AG04449 (cell line): ENCODE measurements at regions of chr1 and their contacts with region 1.

Region 1: DNA sequence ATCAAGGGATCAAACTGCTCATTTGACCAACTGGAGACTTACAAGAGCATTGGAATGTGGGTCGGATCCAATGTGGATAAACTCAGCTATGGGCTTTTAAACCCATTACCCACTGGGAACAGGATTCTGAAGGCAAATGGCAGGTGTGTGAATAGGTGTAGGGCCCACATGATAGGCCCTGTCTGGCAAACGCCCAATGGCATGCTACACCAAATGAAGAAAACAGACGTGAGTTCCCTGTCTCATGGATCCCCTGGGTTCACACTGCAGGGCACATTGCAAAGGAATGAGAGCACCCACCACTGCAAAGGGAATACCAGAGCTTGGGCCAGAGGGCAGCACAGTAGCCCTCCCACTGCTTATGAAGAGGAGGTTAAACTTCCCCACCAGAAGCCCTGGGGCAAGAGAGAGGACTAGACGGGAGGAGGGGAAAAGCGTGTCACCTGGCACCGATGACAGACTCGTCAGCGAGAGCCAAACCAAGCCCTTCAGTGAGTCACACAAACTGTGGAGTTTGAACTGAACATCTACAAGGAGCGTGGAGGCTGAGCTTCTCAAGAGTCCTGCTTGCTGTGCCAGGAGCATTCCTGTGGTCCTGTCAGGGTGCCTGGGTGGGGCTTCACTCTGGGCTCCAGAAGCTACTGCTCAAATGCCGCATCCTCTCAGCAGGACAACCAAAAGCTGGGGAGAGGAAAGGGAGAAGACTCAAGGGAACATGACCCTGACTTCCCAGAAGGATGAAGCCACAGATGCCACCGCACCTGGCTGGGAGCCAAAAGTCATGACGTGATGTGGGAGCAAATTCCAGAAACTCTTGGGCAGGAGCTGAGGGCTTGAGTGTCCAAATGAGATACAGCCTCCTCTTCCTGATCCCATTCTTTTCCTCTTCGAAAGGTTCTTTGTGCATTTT is 61.1 kb downstream of the TOMM20 start:
- DNase-seq: peak; percentile 97
- H3K4me3 ChIP-seq: no peak overlapping the region
- CTCF ChIP-seq: no peak

Region 2: GRCh38 chr1:235011599-235012435 is 55.7 kb before region 1 on chr1:
- CTCF ChIA-PET with region 1: no interaction called
- POLR2A ChIA-PET with region 1: interaction called, 16 read pairs
- DNase-seq: peak; percentile 100
- H3K4me3 ChIP-seq: no peak overlapping the region
- CTCF ChIP-seq: no peak

Region 3: DNA sequence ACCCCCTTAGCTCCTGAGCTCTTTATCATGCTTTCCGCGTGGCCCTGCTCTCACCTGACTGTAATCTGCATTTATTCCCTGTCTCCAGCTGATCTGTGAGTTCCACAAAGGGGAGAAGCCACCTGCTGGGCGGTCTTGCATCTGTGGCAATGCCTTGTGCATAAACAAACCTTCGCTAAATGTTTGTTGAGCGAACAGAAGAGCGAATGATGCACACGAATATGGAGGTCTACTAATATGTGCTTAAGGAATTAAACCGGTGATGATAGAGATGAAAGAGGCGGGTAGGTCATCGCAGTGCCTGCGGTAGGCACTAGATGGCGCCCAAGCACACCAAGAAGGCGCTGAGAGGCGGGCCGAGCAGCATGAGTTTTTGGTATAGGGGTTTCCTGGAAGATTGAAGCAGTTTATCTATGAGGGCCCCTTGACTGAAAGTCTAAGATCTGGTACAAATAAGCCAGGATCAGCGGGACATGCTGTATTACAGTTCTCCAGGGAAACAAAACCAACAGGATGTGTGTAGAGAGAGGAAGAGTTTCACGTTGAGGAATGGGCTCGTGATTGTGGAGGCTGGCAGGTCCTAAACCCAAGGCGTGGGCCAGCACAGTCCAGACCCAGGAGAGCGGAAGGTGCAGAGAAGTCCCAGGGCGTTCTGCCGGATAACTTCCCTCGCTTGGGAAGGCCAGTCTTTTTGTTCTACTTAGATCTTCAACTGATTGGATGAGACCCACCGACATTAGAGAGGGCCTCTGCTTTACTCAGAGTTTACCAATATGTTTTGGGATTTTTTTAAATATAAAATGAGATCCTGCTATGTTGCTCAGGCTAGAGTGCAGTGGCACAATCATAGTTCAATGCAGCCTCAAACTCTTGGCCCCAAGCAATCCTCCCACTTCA is 26.4 kb after region 1 on chr1:
- CTCF ChIA-PET with region 1: no interaction called
- POLR2A ChIA-PET with region 1: no interaction called
- DNase-seq: no peak
- H3K4me3 ChIP-seq: no peak overlapping the region
- CTCF ChIP-seq: peak; percentile 87